Posterior cingulate gyrus (tissue), 11 donors: ENCODE measurements at regions of chr3 and their contacts with region 1.

Region 1: GRCh38 chr3:11060500-11061251 is 68.1 kb downstream of the SLC6A1 start:
- DNase-seq: peak; percentile 59 to 96 (median 78)

Region 2: DNA sequence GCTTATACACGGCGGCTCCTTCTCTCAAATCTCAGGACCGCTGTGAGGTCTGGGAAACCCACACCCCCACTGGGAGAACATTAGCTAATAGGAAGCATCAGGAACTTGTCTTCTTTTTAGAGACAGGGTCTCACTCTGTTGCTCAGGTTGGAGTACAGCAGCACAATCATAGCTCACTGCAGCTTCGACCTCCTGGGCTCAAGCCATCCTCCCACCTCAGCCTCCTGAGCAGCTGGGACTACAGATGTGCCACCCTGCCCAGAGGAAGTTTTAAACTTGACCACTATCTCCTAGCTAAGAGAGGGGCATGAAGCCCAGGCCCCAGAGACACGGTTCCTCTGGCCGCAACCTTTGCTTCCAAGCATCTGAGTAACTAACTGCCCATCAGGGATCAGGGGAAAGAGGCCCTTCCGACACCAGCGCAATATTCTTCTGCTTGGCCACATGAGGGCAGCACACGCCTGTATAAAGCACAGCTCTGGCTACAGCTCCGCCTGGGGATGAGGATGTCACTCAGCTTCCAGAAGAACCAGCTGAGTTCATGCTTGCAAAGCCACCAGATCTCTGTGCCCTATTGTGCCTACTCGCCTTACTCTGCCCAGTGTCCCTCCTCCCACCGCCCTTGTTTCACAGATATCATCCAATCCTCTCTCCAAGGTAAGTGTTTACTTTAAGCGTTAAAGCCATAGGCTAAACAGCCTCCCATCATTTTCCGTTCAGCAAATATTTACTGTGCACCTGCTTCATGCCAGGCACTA is 302.2 kb before region 1 on chr3:
- intact Hi-C with region 1: loop called (anchors 1 kb)
- DNase-seq: peak; percentile 53 to 96 (median 76)

Region 3: GRCh38 chr3:11021611-11022011 is 39.1 kb before region 1 on chr3:
- intact Hi-C with region 1: loop called (anchors 5 kb)
- DNase-seq: peak in 9 of 10 donors; percentile 54 to 96 (median 66)

Region 4: DNA sequence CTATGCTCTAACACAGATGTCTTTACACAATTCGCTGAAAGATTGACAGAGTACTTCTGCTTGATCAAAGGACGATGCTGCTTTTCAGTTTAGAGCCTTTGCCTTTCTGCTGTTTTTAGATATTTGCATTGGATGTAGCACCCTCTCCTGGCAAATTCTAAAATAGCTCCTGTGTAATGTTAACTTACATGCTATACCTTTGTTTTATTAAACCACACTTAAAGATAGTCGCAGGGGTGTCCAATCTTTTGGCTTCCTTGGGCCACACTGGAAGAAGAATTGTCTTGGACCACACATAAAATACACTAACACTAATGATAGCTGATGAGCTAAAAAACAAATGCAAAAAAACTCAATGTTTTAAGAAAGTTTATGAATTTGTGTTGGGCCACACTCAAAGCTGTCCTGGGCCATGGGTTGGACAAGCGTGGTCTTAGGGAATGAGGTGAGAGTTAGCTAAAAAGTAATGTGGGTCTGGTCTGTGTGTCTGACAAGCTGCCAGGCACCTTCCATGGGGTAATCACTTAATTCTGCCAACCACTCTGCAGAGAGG is 274.5 kb after region 1 on chr3:
- intact Hi-C with region 1: loop called (anchors 2 kb)
- DNase-seq: no peak